A549 (cell line): ENCODE measurements at regions of chr2 and their contacts with region 1.

Region 1: GRCh38 chr2:120343433-120344105 is 2.4 kb upstream of the INHBB start:
- DNase-seq: peak; percentile 80 to 91
- ATAC-seq: peak; percentile 66 to 89
- H3K4me3 ChIP-seq: peak overlapping the region; percentile 85
- H3K27ac ChIP-seq: peak overlapping the region; percentile 83 to 93
- H3K4me1 ChIP-seq: peaks cover 27% of the 10 kb centered on the region
- CTCF ChIP-seq: peak; percentile 91
- EP300 ChIP-seq: no peak
- POLR2A ChIP-seq: no peak
- RAD21 ChIP-seq: peak; percentile 96 to 99

Region 2: GRCh38 chr2:119921825-119922224 is 421.7 kb before region 1 on chr2:
- CTCF ChIA-PET with region 1: no interaction called
- POLR2A ChIA-PET with region 1: no interaction called
- DNase-seq: no peak
- ATAC-seq: no peak
- H3K4me3 ChIP-seq: no peak overlapping the region
- H3K27ac ChIP-seq: no peak overlapping the region
- H3K4me1 ChIP-seq: no peaks in the 10 kb centered on the region
- CTCF ChIP-seq: no peak
- EP300 ChIP-seq: no peak
- POLR2A ChIP-seq: no peak
- RAD21 ChIP-seq: no peak

Region 3: DNA sequence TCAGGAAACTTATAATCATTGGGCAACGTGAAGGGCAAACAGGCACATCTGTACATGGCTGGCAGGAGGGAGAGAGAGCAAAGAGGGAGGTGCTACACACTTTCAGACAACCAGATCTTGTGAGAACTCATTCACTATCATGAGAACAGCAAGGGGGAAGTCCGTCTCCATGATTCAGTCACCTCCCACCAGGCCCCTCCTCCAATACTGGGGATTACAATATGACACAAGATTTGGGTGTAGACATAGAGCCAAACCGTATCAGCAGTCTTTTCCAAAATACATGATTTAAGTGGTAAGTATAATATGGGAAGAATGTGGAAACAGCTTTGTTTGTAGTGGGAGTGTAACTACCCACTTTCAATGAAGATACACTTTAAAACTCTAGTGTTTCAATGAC is 265.7 kb before region 1 on chr2:
- CTCF ChIA-PET with region 1: no interaction called
- POLR2A ChIA-PET with region 1: no interaction called
- DNase-seq: no peak
- ATAC-seq: no peak
- H3K4me3 ChIP-seq: no peak overlapping the region
- H3K27ac ChIP-seq: no peak overlapping the region
- H3K4me1 ChIP-seq: no peaks in the 10 kb centered on the region
- CTCF ChIP-seq: no peak
- EP300 ChIP-seq: no peak
- POLR2A ChIP-seq: no peak
- RAD21 ChIP-seq: no peak

Region 4: DNA sequence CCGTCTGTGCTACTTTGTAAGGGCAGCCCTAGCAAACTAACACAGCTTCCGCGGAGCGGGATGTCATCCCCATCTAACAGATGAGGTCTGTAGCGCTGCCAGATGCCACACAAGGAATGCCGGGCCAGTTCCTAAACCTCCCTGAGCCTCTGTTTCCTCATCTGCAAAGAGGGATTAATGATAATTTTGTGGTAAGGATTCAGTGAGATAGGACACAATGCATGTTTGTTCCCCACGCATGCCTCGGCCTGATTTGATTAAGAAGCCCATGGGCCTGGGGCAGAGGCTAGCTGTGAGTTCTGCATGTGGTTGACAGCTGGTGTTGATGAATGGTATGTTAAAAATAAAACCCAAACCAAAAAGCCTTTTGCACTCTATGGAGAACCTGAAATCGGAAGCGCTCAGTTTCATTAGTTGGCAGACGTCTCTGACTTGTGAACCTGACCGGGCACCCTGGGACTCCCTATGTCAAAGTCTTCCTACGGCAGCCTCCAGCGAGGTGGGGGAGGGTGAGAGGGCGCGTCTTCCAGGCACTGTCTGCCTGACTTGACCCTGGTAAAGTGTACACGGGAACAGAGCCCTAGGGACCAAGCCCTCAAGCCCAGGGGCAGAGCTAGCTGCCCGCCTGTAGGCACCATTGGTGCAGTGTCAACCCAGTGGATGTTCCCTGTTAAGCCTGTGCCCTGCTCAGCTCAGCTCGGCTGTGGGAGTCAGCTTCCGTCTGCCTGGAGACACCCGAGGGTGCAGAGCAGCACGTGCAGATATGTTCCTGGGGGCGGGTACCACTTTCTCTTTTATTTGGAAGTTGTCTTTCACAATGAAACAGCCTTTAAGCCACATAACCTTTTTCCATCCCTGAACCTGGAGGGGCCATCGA is 12.4 kb before region 1 on chr2:
- CTCF ChIA-PET with region 1: interaction called, 19 read pairs
- POLR2A ChIA-PET with region 1: no interaction called
- DNase-seq: no peak
- ATAC-seq: peak in 1 of 2 experiments; percentile 24; a peak in 1 of 6 replicates
- H3K4me3 ChIP-seq: no peak overlapping the region
- H3K27ac ChIP-seq: no peak overlapping the region
- H3K4me1 ChIP-seq: no peaks in the 10 kb centered on the region
- CTCF ChIP-seq: no peak
- EP300 ChIP-seq: no peak
- POLR2A ChIP-seq: no peak
- RAD21 ChIP-seq: no peak

Region 5: DNA sequence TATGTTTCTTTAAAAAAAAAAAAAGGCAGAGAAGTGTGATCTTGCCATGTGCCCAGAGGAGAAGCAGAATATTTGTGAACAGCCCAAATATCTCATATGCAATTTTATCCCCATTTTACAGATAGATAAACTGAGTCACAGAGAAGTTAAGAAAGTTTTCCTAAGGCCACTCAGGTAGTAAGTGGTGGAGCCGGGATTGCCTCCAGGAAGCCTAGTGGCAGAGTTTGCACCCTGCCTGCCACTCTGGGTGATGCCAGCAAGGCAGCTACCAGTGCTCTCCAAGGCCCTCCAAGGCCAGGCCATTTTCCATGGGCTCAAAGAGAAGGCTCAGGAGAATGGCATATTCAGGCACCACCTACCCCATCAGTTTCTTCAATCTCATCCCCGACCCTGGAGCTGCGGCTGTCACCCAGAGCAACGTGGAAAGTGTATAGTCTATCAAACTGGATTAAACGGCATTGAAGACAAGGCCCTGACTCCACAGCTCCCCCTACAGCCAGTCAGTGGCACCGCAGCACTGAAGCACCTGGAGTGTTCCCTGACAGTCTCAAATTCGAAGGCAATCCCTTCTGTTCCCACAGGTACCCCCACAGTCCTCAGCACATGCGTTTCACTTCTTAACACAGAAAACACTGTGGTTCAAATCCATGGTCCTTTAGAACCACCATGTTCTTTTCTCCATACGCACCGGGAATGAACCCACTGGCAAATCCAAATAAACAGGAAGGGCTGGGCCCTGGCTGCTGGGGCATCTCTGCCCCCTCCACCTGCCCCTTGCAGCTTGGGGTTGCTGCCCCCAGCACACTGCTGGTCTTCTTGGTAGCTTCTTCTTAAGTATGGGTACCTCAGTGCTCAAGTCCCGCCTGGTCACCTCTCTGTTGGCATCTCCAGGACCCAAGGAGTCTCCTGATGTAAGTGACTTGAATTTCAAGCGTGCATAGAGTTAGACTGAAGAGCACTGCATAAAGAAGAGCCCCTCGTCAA is 177.7 kb after region 1 on chr2:
- CTCF ChIA-PET with region 1: interaction called, 13 read pairs
- POLR2A ChIA-PET with region 1: interaction called, 4 read pairs
- DNase-seq: peak; percentile 40 to 64
- ATAC-seq: peak; percentile 70 to 86
- H3K4me3 ChIP-seq: no peak overlapping the region
- H3K27ac ChIP-seq: no peak overlapping the region
- H3K4me1 ChIP-seq: peaks cover 4% of the 10 kb centered on the region; the same call in 2 of the 3 replicates
- CTCF ChIP-seq: peak; percentile 72
- EP300 ChIP-seq: no peak
- POLR2A ChIP-seq: no peak
- RAD21 ChIP-seq: peak; percentile 66 to 68

Region 6: GRCh38 chr2:120559401-120559800 is 215.8 kb after region 1 on chr2:
- CTCF ChIA-PET with region 1: interaction called, 101 read pairs
- POLR2A ChIA-PET with region 1: no interaction called
- DNase-seq: no peak
- ATAC-seq: no peak; a peak in 1 of 6 replicates
- H3K4me3 ChIP-seq: no peak overlapping the region
- H3K27ac ChIP-seq: no peak overlapping the region
- H3K4me1 ChIP-seq: peaks cover 1% of the 10 kb centered on the region; the same call in 1 of the 3 replicates
- CTCF ChIP-seq: no peak
- EP300 ChIP-seq: no peak
- POLR2A ChIP-seq: no peak
- RAD21 ChIP-seq: no peak